ENCODE measurements at regions of chr9 and their contacts with region 1.

Region 1: GRCh38 chr9:78196258-78196657 is 39.6 kb upstream of the CEP78 start:
- DNase-seq: no peak
- ATAC-seq: no peak
- H3K4me3 ChIP-seq: no peak overlapping the region
- H3K4me3 Mint-ChIP-seq: no peak overlapping the region
- H3K27ac ChIP-seq: no peak overlapping the region
- H3K27ac Mint-ChIP-seq: no peak overlapping the region
- H3K4me1 ChIP-seq: peaks cover 10% of the 10 kb centered on the region
- H3K4me1 Mint-ChIP-seq: peaks cover 28% of the 10 kb centered on the region
- H3K27me3 ChIP-seq: no peaks in the 10 kb centered on the region
- H3K27me3 Mint-ChIP-seq: no peaks in the 10 kb centered on the region
- CTCF ChIP-seq: no peak

Region 2: GRCh38 chr9:78127279-78128225 is 68.7 kb before region 1 on chr9:
- CTCF ChIA-PET with region 1: no interaction called
- POLR2A ChIA-PET with region 1: interaction called, 6 read pairs
- intact Hi-C with region 1: loop called in 1 of 2 experiments (anchors 5 kb)
- DNase-seq: no peak
- ATAC-seq: no peak
- H3K4me3 ChIP-seq: no peak overlapping the region
- H3K4me3 Mint-ChIP-seq: no peak overlapping the region
- H3K27ac ChIP-seq: no peak overlapping the region
- H3K27ac Mint-ChIP-seq: no peak overlapping the region
- H3K4me1 ChIP-seq: no peaks in the 10 kb centered on the region
- H3K4me1 Mint-ChIP-seq: peaks cover 16% of the 10 kb centered on the region
- H3K27me3 ChIP-seq: peaks cover 0 to 3% of the 10 kb centered on the region in 2 experiments
- H3K27me3 Mint-ChIP-seq: peaks cover 4% of the 10 kb centered on the region
- CTCF ChIP-seq: no peak

Region 3: DNA sequence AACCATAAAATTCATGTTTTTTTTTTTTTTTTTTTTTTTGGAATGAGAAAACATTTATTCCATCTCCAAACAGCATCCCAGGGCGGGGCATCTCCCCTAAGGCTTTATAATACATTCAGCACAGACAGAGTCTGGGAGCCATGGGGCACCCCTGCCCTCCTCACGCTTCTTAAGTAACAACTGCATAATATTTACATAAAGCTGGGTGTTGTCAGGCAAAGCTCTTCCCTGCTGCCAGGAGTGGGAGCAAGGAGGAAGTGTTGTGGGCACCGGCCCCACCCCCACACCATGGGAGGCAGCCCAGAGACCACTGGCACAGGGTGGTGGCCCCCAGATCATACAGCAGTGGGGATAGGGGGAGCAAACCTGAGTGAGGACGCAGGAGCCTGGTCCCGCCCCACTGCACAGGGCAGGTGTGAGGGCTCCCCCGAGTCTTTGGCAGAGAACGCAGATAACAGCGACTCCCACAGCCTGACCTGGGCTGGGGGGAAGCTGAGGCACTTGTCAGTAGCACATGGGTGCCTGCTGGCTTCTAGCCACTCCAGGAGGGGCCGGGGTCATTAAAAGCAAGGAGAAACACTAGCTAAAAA is 46.5 kb before region 1 on chr9:
- CTCF ChIA-PET with region 1: no interaction called
- POLR2A ChIA-PET with region 1: no interaction called
- intact Hi-C with region 1: loop called in 1 of 2 experiments (anchors 5 kb)
- DNase-seq: no peak
- ATAC-seq: no peak
- H3K4me3 ChIP-seq: no peak overlapping the region
- H3K4me3 Mint-ChIP-seq: no peak overlapping the region
- H3K27ac ChIP-seq: no peak overlapping the region
- H3K27ac Mint-ChIP-seq: no peak overlapping the region
- H3K4me1 ChIP-seq: no peaks in the 10 kb centered on the region
- H3K4me1 Mint-ChIP-seq: no peaks in the 10 kb centered on the region
- H3K27me3 ChIP-seq: no peaks in the 10 kb centered on the region
- H3K27me3 Mint-ChIP-seq: no peaks in the 10 kb centered on the region
- CTCF ChIP-seq: no peak